HepG2 (cell line): ENCODE measurements at regions of chr2 and their contacts with region 1.

Region 1: GRCh38 chr2:21175895-21176646 is 52.3 kb downstream of the TDRD15 start:
- DNase-seq: peak; percentile 10
- ATAC-seq: peak; percentile 36; the same call in 1 of the 3 replicates
- H3K4me3 ChIP-seq: no peak overlapping the region
- H3K27ac ChIP-seq: no peak overlapping the region
- H3K4me1 ChIP-seq: no peaks in the 10 kb centered on the region
- H3K27me3 ChIP-seq: 0 out of 5 replicates have a peak, but pooled peaks cover 0 to 2% of the 10 kb centered on the region in 2 experiments
- CTCF ChIP-seq: peak; percentile 38
- EP300 ChIP-seq: no peak
- POLR2A ChIP-seq: no peak
- RAD21 ChIP-seq: peak; percentile 24; the same call in 1 of the 2 replicates

Region 2: DNA sequence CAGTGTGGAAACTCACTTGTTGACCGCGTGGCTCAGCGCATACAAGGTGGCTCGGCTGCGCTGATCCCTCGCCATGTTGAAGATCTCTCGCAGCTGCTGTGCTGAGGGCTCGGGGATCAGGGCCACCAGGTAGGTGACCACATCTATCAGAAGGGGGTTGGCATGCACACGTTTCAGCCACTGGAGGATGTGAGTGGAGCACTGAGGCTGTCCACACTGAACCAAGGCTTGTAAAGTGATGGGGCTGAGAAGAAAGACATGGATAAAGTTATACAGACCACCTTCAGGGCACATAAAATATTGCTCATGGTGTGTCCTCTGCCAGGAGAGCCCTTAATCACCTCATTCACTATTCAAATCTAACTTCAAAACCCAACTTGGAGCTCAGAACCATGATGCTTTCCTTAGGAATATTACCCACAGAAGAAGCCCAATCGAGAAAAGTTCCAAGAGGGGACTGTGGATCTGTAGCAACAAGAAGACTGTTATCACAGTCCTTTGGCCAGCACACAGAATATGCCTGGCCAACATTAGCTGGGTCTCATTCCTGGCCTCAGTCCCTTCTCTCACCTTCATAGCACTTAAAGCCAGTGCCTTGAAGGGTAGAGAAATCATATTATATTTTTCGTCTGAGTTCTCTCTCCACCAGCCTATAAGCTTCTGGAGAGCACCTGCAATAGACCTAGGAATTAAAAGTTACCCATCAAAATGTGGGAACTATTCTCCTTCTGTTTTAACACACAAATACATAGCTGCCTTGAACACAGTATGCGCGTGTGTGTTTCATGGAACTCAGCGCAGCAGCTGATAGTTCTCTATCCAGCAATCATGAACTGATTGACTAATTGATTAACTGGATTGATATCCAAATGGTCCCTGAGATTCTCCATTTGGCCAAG is 143.5 kb before region 1 on chr2:
- CTCF ChIA-PET with region 1: no interaction called
- POLR2A ChIA-PET with region 1: no interaction called
- in situ Hi-C with region 1: no loop called
- intact Hi-C with region 1: no loop called
- DNase-seq: no peak
- ATAC-seq: peak; percentile 8
- H3K4me3 ChIP-seq: peak overlapping the region in 1 of 3 experiments; percentile 14; a peak in 1 of 6 replicates
- H3K27ac ChIP-seq: peak overlapping the region; percentile 8
- H3K4me1 ChIP-seq: peaks cover 99% of the 10 kb centered on the region
- H3K27me3 ChIP-seq: no peaks in the 10 kb centered on the region
- CTCF ChIP-seq: no peak
- EP300 ChIP-seq: no peak
- POLR2A ChIP-seq: peak; percentile 59 to 73; a peak in 3 of 4 replicates
- RAD21 ChIP-seq: no peak

Region 3: GRCh38 chr2:21146638-21147037 is 29.4 kb before region 1 on chr2:
- CTCF ChIA-PET with region 1: no interaction called
- POLR2A ChIA-PET with region 1: no interaction called
- in situ Hi-C with region 1: no loop called
- intact Hi-C with region 1: no loop called
- DNase-seq: no peak
- ATAC-seq: no peak
- H3K4me3 ChIP-seq: no peak overlapping the region
- H3K27ac ChIP-seq: no peak overlapping the region
- H3K4me1 ChIP-seq: peaks cover 10% of the 10 kb centered on the region
- H3K27me3 ChIP-seq: no peaks in the 10 kb centered on the region
- CTCF ChIP-seq: no peak
- EP300 ChIP-seq: no peak
- POLR2A ChIP-seq: no peak
- RAD21 ChIP-seq: no peak

Region 4: GRCh38 chr2:21317131-21317530 is 141.1 kb after region 1 on chr2:
- CTCF ChIA-PET with region 1: interaction called, 22 read pairs
- POLR2A ChIA-PET with region 1: no interaction called
- in situ Hi-C with region 1: loop called (anchors 5 kb)
- intact Hi-C with region 1: loop called (anchors 1 kb)
- DNase-seq: peak; percentile 60
- ATAC-seq: peak; percentile 92
- H3K4me3 ChIP-seq: no peak overlapping the region
- H3K27ac ChIP-seq: no peak overlapping the region
- H3K4me1 ChIP-seq: no peaks in the 10 kb centered on the region
- H3K27me3 ChIP-seq: peaks cover 0 to 10% of the 10 kb centered on the region in 2 experiments; a peak in 3 of 5 replicates
- CTCF ChIP-seq: peak; percentile 73
- EP300 ChIP-seq: no peak
- POLR2A ChIP-seq: no peak
- RAD21 ChIP-seq: peak; percentile 42; the same call in 1 of the 2 replicates

Region 5: GRCh38 chr2:21395366-21395765 is 219.3 kb after region 1 on chr2:
- CTCF ChIA-PET with region 1: no interaction called
- POLR2A ChIA-PET with region 1: no interaction called
- in situ Hi-C with region 1: no loop called
- intact Hi-C with region 1: loop called (anchors 5 kb)
- DNase-seq: peak; percentile 35
- ATAC-seq: peak; percentile 99
- H3K4me3 ChIP-seq: no peak overlapping the region
- H3K27ac ChIP-seq: no peak overlapping the region
- H3K4me1 ChIP-seq: no peaks in the 10 kb centered on the region
- H3K27me3 ChIP-seq: no peaks in the 10 kb centered on the region
- CTCF ChIP-seq: peak; percentile 67
- EP300 ChIP-seq: no peak
- POLR2A ChIP-seq: no peak
- RAD21 ChIP-seq: 0 out of 2 replicates have a peak, but pooled peaks have one; percentile 9